ENCODE measurements at regions of chr20 and their contacts with region 1.

Region 1: GRCh38 chr20:57346477-57346876 is 4.6 kb upstream of the RAE1 start:
- DNase-seq: peak; percentile 62 to 69
- ATAC-seq: peak in 5 of 8 donors; percentile 44 to 59 (median 49)
- H3K4me3 ChIP-seq: no peak overlapping the region
- H3K27ac ChIP-seq: no peak overlapping the region
- H3K4me1 ChIP-seq: peaks cover 0 to 3% (median 0%) of the 10 kb centered on the region in 9 donors
- H3K27me3 ChIP-seq: peaks cover 0 to 44% (median 4%) of the 10 kb centered on the region in 7 donors
- CTCF ChIP-seq: peak; percentile 46 to 83 (median 79)

Region 2: GRCh38 chr20:56540420-56540819 is 806.1 kb before region 1 on chr20:
- intact Hi-C with region 1: loop called in 1 of 10 experiments (anchors 10 kb)
- DNase-seq: no peak
- ATAC-seq: no peak
- H3K4me3 ChIP-seq: no peak overlapping the region
- H3K27ac ChIP-seq: no peak overlapping the region
- H3K4me1 ChIP-seq: no peaks in the 10 kb centered on the region
- H3K27me3 ChIP-seq: no peaks in the 10 kb centered on the region
- CTCF ChIP-seq: no peak

Region 3: DNA sequence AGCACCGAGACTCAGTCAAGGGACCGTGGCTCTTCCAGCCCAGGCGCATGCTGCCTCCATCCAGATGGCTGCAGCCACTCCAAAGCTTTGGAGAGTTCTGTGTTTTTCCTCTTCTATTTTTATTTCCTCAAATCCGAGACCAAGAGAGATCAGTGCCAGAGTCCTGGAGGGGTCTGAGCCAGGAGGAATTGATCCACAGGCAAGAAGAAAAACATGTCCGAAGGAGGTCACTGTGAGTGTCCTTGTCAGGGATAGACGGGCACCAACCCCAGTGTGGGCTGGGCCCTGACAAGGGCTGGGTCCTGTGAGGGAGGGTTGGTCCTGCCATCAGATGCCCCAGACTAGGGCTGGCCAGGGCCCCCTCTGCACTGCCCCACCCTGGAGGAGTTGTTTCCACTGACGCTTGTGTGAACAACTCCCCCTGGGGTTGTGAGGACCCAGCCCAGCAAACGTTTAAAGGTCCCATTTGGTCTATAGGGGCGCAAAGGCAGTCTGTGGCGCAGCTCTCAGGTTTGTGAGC is 184.3 kb before region 1 on chr20:
- intact Hi-C with region 1: no loop called
- DNase-seq: peak in 1 of 2 donors; percentile 55
- ATAC-seq: peak; percentile 36 to 63 (median 54)
- H3K4me3 ChIP-seq: peak overlapping the region in 7 of 10 donors; percentile 10 to 37 (median 28)
- H3K27ac ChIP-seq: peak overlapping the region in 9 of 10 donors; percentile 31 to 91 (median 68)
- H3K4me1 ChIP-seq: peaks cover 0 to 6% (median 0%) of the 10 kb centered on the region in 9 donors
- H3K27me3 ChIP-seq: peaks cover 0 to 5% (median 0%) of the 10 kb centered on the region in 7 donors
- CTCF ChIP-seq: no peak

Region 4: DNA sequence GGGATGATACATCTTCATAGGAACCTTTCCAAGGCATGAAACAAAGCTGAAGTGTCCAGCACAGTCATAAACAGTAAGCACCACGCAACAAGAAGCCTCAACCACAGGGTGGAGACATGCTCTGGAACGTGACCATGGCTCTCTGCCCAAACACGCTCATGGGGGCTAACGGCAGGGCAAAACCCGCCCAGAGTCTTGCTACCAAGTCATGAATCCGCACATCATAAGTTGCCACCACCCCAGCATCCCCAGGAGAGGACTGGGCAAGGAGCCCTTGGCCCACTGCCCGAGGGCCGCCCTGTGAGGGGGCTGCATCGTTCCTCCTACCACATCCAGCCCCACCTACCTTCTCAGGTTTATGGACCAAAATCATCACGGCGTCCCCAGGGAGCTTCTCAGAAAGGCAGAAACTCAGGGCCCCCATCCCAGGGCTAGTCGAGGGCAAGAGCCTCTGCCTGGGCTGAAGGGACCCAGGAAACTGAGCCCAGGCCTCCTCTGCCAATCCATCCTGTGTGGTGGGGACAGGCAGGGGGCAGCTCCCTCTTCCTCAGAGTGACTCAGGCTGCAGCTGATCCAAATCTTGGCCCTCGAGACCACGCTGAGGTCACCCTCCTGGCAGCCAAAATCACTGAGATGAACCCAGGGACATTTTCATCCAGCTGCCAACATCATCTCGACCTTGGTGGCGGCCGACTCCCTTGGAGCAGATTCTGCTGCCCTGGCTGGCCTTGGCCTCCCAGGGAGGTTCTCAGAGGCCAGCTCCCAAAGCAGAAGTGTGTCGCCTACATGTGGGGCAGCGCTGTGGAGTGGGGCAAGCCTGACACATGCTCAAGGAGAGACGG is 122.6 kb before region 1 on chr20:
- intact Hi-C with region 1: no loop called
- DNase-seq: peak in 1 of 2 donors; percentile 28
- ATAC-seq: peak in 5 of 8 donors; percentile 13 to 63 (median 41)
- H3K4me3 ChIP-seq: no peak overlapping the region
- H3K27ac ChIP-seq: no peak overlapping the region
- H3K4me1 ChIP-seq: peaks cover 0 to 11% (median 0%) of the 10 kb centered on the region in 9 donors
- H3K27me3 ChIP-seq: peaks cover 0 to 37% (median 0%) of the 10 kb centered on the region in 7 donors
- CTCF ChIP-seq: no peak

Region 5: DNA sequence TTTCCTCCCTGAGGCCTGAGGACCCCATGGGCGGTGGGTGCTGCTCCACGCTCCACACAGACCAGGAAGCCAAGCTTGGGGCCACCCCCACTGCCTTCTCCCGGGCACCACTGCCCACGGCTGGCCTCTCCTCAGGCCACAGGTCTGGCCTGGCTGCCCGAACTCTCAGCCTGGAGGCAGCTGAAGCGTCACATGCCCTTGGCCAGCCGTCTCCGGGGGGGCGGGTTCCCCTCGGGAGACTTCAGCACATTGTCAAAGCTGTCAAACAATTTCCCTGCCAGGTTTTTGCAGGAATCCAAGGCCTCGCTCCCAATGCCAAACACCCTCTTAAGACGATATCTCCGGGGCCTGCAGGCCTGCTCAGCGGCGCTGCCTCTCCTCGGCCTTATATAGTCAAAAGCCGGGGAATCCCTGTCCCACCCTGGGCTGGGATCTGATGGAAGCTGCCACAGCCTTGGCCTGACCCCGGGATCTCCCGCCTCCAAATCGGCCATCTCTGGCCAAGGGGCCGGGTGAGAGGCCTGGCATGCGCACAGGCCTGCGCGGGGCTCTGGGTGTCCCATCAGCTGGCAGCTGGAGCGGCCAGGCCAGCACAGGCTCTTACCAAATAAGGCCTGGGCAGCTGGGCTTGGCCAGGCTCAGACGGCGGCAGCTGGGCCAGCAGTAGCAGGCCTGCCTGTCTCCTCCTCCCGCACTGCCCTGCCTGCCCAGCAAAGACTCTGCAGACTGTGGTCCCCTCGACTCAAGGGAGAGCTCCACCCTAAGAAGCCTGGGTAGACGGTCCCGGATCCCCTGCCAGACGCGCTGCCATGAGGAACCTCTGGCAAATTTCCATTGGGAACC is 94.4 kb after region 1 on chr20:
- intact Hi-C with region 1: no loop called
- DNase-seq: peak; percentile 85 to 86
- ATAC-seq: peak; percentile 83 to 90 (median 87)
- H3K4me3 ChIP-seq: no peak overlapping the region
- H3K27ac ChIP-seq: peak overlapping the region; percentile 58 to 98 (median 86)
- H3K4me1 ChIP-seq: peaks cover 11 to 73% (median 29%) of the 10 kb centered on the region in 9 donors
- H3K27me3 ChIP-seq: no peaks in the 10 kb centered on the region
- CTCF ChIP-seq: no peak

Region 6: GRCh38 chr20:57638173-57638894 is 291.9 kb after region 1 on chr20:
- intact Hi-C with region 1: no loop called
- DNase-seq: no peak
- ATAC-seq: no peak
- H3K4me3 ChIP-seq: no peak overlapping the region
- H3K27ac ChIP-seq: no peak overlapping the region
- H3K4me1 ChIP-seq: no peaks in the 10 kb centered on the region
- H3K27me3 ChIP-seq: peaks cover 0 to 14% (median 0%) of the 10 kb centered on the region in 7 donors
- CTCF ChIP-seq: no peak

Measured in heart right ventricle (tissue), 16 donors.